ENCODE measurements at regions of chr15 and their contacts with region 1.

Region 1: DNA sequence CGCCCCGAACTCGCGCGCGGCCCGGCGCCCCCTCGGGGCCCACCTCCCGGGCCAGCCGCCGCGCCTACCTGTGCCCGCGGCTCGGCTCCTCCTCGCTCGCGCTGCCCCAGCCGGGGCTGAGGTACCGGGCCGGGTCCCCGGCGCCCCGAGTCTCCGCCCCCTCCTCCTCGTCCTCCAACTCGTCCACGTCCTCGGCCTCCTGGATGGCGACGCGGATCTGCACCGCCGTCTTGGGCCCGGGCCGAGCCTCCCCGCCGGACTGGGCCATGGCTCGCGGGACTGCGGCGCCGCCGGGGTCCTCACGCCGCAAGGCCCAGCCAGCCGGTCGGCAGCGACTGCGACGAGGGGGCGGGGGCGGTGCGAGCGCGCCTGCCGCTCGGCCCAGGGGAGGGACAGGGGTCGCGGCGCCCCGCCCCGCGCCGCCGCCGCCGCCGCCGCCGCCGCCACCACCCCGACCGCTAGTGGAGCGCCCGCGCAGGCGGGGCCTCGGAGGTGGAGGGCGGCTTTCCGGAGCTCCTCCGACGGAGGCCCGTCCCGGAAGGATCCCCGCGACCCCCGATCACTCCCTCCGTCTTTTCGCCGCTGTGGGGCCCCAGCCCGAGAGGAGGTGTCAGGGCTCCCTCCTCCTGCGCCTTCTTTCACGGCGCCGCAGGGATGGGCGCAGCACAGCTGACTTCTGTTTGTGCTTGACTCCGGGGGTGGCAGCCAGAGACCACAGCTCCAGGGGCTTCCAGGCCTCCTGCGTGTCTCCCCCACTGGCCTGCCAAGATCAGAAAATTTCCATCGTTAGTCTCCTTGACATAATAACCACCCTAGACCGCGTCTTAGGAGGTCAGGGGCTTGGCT is at the start of gene LARP6:
- DNase-seq: peak; percentile 76

Region 2: GRCh38 chr15:70713714-70714414 is 140.2 kb before region 1 on chr15:
- CTCF ChIA-PET with region 1: no interaction called
- POLR2A ChIA-PET with region 1: no interaction called
- DNase-seq: no peak

Region 3: GRCh38 chr15:70783599-70784022 is 70.4 kb before region 1 on chr15:
- CTCF ChIA-PET with region 1: no interaction called
- POLR2A ChIA-PET with region 1: no interaction called
- DNase-seq: no peak

Region 4: GRCh38 chr15:70826634-70827033 is 27.4 kb before region 1 on chr15:
- CTCF ChIA-PET with region 1: interaction called, 9 read pairs
- POLR2A ChIA-PET with region 1: interaction called, 10 read pairs
- DNase-seq: no peak

Region 5: GRCh38 chr15:70833897-70834765 is 19.9 kb before region 1 on chr15:
- CTCF ChIA-PET with region 1: interaction called, 3 read pairs
- POLR2A ChIA-PET with region 1: interaction called, 27 read pairs
- DNase-seq: peak; percentile 55

Region 6: GRCh38 chr15:70870051-70870450 is 16.0 kb after region 1 on chr15:
- CTCF ChIA-PET with region 1: interaction called, 8 read pairs
- POLR2A ChIA-PET with region 1: interaction called, 26 read pairs
- DNase-seq: no peak

Region 7: DNA sequence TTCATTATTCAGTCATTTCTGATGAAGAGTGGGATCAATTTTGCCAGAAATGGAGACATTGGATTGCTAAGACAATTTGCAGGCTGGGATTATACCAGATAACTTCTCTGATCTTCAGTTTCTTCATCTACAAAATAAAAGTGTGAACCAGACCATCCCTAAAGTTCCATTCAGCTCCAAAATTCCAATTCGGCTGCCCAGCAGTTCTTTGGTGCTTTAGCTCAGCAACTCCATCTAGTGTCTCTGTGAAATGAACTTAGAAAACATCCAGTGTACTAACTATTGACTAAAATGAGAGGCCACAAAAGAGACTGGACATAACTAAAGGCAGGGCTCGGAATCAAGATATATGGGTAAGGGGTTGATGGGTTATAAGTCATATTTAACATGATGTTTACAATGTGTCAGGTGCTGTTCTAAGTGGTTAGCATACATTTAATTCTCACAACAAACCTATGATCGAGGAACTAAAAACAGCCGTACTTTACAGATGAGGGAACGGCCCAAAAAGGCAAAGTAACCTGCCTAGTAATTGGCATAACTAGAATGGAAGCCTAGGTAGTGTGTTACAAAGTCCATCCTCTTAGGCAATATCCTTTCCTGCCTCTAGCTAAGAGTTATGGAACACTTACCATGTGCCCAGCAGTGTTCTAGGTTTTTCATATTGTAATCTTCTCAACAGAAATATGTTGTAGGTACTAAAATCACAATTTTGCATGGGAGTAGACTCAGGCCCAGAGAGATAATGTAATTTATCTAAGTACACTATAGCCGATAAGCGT is 21.1 kb after region 1 on chr15:
- CTCF ChIA-PET with region 1: interaction called, 8 read pairs
- POLR2A ChIA-PET with region 1: interaction called, 26 read pairs
- DNase-seq: no peak